ENCODE measurements at regions of chrX and their contacts with region 1.

Region 1: GRCh38 chrX:130079824-130080406 is 30.4 kb downstream of the ELF4 start:
- DNase-seq: peak; percentile 85
- H3K4me3 Mint-ChIP-seq: no peak overlapping the region
- H3K27ac Mint-ChIP-seq: peak overlapping the region; percentile 58
- H3K4me1 Mint-ChIP-seq: peaks cover 42% of the 10 kb centered on the region
- H3K27me3 Mint-ChIP-seq: no peaks in the 10 kb centered on the region

Region 2: DNA sequence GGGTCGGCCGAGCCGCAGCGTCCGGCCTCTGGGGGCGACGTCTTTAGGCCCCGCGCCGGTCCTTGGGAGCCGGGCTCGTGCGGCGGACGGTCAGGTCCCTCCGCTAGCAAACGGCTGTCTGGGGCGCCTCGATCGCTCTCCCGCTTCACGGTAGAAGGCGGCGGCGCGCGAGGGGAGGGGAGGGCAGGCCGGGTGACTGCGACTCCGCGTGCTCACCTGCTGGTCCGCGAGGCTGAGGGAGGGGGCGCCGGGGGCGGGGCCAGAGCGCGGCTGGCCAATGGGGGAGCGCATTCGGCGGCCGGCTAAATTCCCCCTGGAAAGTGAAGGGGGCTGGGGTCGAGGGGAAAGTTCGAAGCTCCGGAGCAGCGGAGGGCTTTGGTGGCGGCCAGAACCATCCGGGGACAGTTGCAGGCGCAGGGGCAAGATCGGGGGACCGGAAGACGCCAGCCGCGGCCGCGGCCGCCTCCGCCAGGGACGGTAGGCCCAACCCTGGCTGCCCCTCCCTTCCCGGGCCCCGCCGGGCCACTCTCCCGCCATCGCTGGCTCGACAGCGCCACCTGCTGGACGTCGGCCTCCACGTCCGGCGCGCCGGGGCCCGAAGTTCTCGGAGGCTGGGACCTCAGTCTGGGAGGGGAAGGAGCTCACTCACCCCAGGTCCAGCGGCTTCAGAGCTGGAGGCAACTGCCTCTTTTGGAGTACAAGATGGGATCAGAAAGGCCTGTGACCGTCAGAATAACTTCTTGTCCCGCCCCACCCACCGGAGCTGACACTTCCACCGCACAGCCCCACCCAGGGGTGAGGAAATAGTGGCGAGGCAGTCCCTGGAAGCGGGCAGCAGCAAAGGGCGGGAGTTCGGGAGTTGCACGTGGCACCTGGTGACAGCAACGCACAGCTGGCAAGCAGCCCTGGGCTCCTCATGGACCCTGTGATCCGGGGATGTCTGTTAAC is 19.5 kb before region 1 on chrX:
- intact Hi-C with region 1: no loop called
- DNase-seq: peak; percentile 96
- H3K4me3 Mint-ChIP-seq: peak overlapping the region; percentile 79
- H3K27ac Mint-ChIP-seq: peak overlapping the region; percentile 84
- H3K4me1 Mint-ChIP-seq: peaks cover 4% of the 10 kb centered on the region
- H3K27me3 Mint-ChIP-seq: no peaks in the 10 kb centered on the region

Region 3: DNA sequence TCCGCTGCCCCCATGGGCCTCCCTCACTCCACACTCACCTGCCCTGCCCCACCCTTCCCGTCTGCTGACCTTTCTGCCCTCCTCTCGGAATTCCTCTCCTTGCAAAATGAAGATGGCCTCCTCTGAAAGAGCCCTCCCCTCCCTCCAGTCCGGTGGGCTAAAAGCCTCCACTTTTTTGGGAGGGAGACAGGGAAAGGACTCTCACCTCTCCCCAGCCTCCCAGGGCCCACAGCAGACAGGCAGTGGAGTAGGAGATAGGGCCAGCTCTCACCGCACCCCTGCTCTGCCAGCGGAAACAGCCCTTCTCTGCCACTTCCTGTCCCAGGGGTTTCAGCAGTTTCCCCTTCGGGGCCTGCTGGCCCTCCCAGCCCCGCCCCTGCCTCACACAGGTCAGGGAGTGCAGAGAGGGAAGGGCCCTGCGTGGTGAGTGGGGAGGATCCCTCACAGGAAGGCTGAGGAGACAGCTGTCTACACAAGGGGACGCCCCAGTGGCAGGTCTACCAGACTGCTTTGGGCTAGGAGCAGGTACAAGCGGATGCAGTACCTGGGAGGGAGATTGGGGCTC is 12.1 kb after region 1 on chrX:
- intact Hi-C with region 1: loop called (anchors 1 kb)
- DNase-seq: peak; percentile 94
- H3K4me3 Mint-ChIP-seq: peak overlapping the region; percentile 86
- H3K27ac Mint-ChIP-seq: peak overlapping the region; percentile 95
- H3K4me1 Mint-ChIP-seq: peaks cover 35% of the 10 kb centered on the region
- H3K27me3 Mint-ChIP-seq: no peaks in the 10 kb centered on the region

Region 4: DNA sequence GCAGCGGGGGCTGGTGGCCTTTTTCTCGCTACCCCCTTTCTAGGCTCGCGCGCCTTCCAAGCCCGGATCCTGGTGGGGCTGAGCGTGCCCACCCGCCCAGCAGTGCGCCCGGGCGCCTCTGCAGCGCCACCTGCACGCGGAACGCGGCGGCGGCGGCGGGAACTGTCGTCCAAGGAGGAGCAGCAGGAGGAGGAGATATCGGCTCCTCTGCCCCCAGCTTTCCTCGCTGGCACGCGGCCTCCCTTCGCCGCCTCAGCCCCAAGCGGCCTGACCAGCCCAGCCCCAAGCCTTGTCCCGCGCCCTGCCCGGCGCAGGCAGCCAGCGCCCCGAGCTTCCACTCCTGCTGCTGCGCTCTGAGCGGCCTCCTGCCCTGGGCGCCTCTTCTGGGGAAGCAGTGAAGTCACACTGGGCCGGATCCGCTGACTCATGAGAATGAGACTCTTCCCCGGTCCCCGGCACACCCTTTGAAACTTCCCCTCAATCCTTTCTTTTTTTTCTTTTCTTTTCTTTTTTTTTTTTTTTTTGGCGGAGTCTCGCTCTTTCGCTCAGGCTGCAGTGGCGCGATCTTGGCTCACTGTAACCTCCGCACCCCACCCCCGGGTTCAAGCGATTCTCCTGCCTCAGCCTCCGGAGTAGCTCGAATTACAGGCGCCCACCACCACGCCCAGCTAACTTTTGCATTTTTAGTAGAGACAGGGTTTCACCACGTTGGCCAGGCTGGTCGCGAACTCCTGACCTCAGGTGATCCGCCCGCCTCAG is 41.0 kb after region 1 on chrX:
- intact Hi-C with region 1: loop called (anchors 1 kb)
- DNase-seq: peak; percentile 90
- H3K4me3 Mint-ChIP-seq: peak overlapping the region; percentile 72
- H3K27ac Mint-ChIP-seq: peak overlapping the region; percentile 57
- H3K4me1 Mint-ChIP-seq: peaks cover 17% of the 10 kb centered on the region
- H3K27me3 Mint-ChIP-seq: no peaks in the 10 kb centered on the region

Region 5: GRCh38 chrX:130173190-130173895 is 93.4 kb after region 1 on chrX:
- intact Hi-C with region 1: loop called (anchors 2 kb)
- DNase-seq: peak; percentile 77
- H3K4me3 Mint-ChIP-seq: peak overlapping the region; percentile 94
- H3K27ac Mint-ChIP-seq: peak overlapping the region; percentile 86
- H3K4me1 Mint-ChIP-seq: peaks cover 46% of the 10 kb centered on the region
- H3K27me3 Mint-ChIP-seq: no peaks in the 10 kb centered on the region

Region 6: DNA sequence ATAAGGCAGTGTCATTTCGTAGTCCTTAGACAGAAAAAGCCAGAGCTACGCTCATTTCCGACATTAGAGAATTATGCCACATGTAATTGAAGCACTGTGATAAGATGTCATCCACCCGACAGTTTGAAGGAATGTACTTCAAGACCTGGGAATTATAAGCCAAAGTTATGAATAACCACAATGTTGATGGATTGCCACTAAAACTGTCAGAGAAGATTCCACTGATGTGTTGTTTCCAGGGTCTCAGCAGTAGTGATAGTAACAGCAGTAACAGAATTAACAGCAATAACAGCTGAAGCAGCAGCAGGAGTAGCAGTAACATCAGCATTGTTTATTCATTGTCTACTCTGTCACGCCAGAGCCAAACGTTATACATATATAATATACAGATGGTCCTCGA is 116.6 kb after region 1 on chrX:
- intact Hi-C with region 1: loop called (anchors 1 kb)
- DNase-seq: no peak
- H3K4me3 Mint-ChIP-seq: no peak overlapping the region
- H3K27ac Mint-ChIP-seq: no peak overlapping the region
- H3K4me1 Mint-ChIP-seq: peaks cover 2% of the 10 kb centered on the region
- H3K27me3 Mint-ChIP-seq: no peaks in the 10 kb centered on the region